ENCODE measurements at regions of chr4 and their contacts with region 1.

Region 1: DNA sequence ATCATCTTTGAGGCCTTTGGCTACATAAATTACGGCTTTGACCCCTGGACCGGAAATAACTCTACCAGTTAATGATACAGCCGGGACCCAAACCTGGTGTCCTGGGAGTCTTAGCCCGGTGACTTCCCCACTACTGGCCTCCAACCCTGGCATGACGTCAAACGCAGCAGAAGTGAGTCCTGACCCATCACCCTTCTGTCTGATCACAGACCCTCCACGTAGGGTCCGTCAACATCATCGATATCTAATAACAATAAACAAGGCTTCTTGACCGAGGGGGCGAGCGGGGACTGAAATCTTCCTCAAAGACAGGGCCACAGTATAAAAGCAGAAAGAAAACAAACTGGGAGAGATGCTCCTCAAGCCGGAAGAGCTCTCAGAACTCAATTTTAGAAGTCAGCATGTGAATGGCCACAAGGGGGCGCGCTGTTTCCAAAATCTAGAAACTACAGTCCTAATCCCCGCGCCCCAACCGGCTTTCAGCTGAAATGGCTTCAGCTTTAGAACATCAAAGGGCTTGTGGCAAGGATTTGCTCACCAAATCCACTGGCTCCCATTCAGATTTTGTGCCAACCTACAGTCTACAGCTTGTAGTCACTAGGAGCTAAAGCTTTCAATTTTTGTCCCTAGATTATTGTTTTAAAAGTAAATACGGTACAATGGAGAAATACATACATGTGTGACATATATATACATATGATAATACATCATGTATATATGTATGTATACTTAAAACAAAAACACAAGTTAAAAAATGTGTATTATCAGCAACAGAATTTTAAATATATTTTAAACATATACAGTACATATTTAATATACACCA is 46.4 kb upstream of the ENPP6 start:
- DNase-seq: peak; percentile 65 to 80
- H3K4me3 ChIP-seq: no peak overlapping the region
- H3K27ac ChIP-seq: no peak overlapping the region
- H3K4me1 ChIP-seq: peaks cover 31% of the 10 kb centered on the region
- H3K27me3 ChIP-seq: no peaks in the 10 kb centered on the region
- CTCF ChIP-seq: peak; percentile 83

Region 2: DNA sequence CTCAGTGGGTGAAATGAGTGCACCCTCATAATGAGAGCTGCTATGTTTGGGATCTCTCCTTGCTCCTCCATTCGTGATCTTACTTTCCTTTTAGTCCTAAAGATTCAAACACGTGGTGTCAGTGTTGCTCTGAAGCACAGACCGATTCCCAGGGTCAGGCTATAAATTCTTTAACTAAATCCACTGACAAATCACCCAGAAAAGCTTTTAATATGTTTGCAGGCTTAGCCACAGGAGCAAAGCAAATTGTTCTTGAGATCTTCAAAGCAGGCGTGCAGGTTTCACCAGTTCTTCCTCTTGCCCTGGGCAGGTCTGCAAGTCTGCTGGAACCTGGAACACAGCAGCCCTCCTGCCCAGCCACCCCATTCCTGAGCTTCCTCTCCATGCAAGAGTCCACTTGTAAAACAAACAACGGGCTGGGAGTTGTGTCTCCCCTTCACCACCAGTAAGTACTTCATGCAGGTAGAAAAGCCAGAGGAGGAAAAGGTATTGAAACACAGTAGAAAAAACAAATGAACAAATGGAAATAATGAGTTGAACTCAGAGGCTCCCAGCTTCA is 23.7 kb after region 1 on chr4:
- CTCF ChIA-PET with region 1: interaction called, 7 read pairs
- POLR2A ChIA-PET with region 1: no interaction called
- intact Hi-C with region 1: loop called (anchors 1 kb)
- DNase-seq: peak; percentile 76 to 93
- H3K4me3 ChIP-seq: peak overlapping the region; percentile 27; the same call in 1 of the 2 replicates
- H3K27ac ChIP-seq: peak overlapping the region; percentile 69
- H3K4me1 ChIP-seq: peaks cover 28% of the 10 kb centered on the region
- H3K27me3 ChIP-seq: no peaks in the 10 kb centered on the region
- CTCF ChIP-seq: peak; percentile 25; the same call in 1 of the 2 replicates

Region 3: DNA sequence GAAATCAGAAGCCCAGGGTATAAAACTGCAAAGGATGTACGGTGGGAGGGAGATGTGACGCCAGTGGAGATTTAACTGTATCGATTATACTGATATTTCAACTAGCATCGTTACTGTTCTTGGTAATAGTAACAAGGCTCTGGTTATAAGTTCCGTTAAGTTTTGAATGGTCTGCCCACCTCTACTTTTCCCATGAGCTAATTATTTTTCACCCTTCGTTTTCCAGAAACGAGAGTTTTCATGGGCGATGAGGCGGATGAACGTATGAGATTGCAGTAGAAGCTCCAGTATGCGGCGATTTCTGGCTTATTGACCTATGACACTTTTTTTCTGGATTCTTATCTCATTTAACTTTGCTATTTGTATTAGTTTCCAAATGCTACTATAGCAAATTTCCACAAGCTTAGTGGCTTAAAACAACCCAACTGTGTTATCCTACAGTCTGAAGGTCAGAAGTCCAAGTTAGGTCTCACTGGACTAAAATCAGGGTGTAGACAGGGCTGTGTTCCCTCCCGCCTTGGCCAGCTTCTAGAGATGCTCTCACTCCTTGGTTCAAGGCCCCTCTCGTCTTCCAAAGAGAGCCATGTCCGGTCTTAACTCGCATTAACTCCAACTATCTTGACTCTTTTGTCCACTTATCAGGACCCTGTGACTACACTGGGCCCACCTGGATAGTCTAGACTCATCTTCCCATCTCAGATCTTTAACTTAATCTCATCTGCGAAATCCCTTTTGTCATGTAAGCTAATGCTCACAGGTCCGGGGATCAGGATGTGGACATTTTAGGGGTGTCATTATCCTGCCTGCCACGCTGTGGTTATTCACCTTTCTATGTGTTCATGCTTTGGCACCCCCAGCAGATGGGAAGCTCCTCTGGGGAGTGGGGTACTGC is 87.7 kb after region 1 on chr4:
- CTCF ChIA-PET with region 1: no interaction called
- POLR2A ChIA-PET with region 1: no interaction called
- intact Hi-C with region 1: no loop called
- DNase-seq: no peak
- H3K4me3 ChIP-seq: no peak overlapping the region
- H3K27ac ChIP-seq: no peak overlapping the region
- H3K4me1 ChIP-seq: peaks cover 16% of the 10 kb centered on the region
- H3K27me3 ChIP-seq: no peaks in the 10 kb centered on the region
- CTCF ChIP-seq: no peak

Region 4: DNA sequence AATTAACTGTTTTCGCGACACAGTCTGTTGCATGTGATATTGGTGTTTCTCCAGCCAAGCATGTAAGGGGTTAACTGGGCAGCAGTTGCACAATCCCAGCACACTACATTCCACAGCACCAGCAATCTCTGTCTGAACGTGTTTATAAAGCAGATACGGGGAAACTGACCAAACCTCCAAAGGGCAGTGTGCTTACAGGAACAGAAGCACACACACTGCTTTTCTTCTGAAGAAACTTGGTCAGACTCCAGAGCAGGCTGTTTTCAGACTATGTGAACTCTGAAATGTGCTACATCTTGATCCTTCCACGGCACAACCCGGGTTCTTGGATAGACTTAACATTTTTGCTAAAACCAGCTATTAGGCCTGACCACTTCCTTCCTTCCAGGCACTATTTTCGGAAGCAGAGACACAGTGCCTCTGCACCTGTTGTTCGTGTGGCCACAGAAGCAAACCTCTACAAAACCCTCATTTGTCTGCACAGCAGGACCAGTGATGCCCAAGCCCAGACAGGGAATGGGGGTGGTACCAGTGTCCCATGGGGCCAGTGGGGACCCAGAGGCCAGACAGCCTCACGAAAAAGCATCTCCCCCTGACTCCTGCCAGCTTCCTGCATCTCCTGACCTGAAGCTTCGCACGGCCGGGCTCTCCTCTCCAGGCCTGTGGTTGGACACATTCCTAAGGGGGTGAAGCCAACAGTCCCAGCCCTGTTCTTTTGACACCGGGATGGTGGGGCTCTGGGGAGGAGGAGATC is 120.1 kb after region 1 on chr4:
- CTCF ChIA-PET with region 1: no interaction called
- POLR2A ChIA-PET with region 1: interaction called, 3 read pairs
- intact Hi-C with region 1: loop called (anchors 1 kb)
- DNase-seq: peak; percentile 44 to 74
- H3K4me3 ChIP-seq: peak overlapping the region; percentile 59; the same call in 1 of the 2 replicates
- H3K27ac ChIP-seq: peak overlapping the region; percentile 96
- H3K4me1 ChIP-seq: peaks cover 41% of the 10 kb centered on the region
- H3K27me3 ChIP-seq: no peaks in the 10 kb centered on the region
- CTCF ChIP-seq: no peak

Region 5: DNA sequence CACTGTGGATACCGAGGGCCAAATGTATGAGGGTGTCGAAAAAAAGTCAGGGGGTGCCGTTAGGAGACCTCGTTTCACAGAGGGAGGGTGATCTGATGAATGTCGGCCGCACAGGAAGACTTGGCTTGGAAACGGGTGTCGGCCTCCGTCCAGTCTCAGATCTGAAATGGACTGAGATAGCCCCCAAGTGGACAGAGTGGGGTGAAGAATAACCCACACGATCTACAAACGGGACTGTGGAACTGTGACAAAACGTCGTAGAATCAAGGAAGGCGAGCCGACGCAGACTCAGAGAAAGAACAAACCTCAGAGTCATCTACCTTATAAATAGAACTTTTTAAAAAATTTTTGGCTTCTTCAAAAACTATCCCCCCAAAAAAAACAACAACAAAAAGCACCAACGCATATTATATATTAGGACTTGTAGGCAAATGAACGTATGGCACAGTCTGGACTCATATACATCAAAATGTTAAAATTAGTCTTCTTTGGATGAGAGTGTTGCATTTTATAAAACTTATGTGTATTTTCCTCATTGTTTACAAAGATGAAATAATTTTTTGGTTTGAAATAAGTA is 274.0 kb after region 1 on chr4:
- CTCF ChIA-PET with region 1: interaction called, 5 read pairs
- POLR2A ChIA-PET with region 1: no interaction called
- intact Hi-C with region 1: loop called (anchors 1 kb)
- DNase-seq: peak; percentile 65 to 71
- H3K4me3 ChIP-seq: peak overlapping the region; percentile 67
- H3K27ac ChIP-seq: peak overlapping the region; percentile 66
- H3K4me1 ChIP-seq: no peaks in the 10 kb centered on the region; the same call in 1 of the 2 replicates
- H3K27me3 ChIP-seq: no peaks in the 10 kb centered on the region
- CTCF ChIP-seq: peak; percentile 67

Region 6: GRCh38 chr4:184695178-184695896 is 431.2 kb after region 1 on chr4:
- CTCF ChIA-PET with region 1: no interaction called
- POLR2A ChIA-PET with region 1: no interaction called
- intact Hi-C with region 1: loop called (anchors 10 kb)
- DNase-seq: no peak
- H3K4me3 ChIP-seq: no peak overlapping the region
- H3K27ac ChIP-seq: no peak overlapping the region
- H3K4me1 ChIP-seq: no peaks in the 10 kb centered on the region
- H3K27me3 ChIP-seq: no peaks in the 10 kb centered on the region
- CTCF ChIP-seq: no peak

Region 7: GRCh38 chr4:184815046-184815877 is 551.1 kb after region 1 on chr4:
- CTCF ChIA-PET with region 1: no interaction called
- POLR2A ChIA-PET with region 1: no interaction called
- intact Hi-C with region 1: loop called (anchors 10 kb)
- DNase-seq: peak; percentile 87
- H3K4me3 ChIP-seq: peak overlapping the region; percentile 44
- H3K27ac ChIP-seq: peak overlapping the region; percentile 85
- H3K4me1 ChIP-seq: peaks cover 57% of the 10 kb centered on the region
- H3K27me3 ChIP-seq: no peaks in the 10 kb centered on the region
- CTCF ChIP-seq: no peak